CD4-positive, alpha-beta T cell (primary cell): ENCODE measurements at regions of chr1 and their contacts with region 1.

Region 1: DNA sequence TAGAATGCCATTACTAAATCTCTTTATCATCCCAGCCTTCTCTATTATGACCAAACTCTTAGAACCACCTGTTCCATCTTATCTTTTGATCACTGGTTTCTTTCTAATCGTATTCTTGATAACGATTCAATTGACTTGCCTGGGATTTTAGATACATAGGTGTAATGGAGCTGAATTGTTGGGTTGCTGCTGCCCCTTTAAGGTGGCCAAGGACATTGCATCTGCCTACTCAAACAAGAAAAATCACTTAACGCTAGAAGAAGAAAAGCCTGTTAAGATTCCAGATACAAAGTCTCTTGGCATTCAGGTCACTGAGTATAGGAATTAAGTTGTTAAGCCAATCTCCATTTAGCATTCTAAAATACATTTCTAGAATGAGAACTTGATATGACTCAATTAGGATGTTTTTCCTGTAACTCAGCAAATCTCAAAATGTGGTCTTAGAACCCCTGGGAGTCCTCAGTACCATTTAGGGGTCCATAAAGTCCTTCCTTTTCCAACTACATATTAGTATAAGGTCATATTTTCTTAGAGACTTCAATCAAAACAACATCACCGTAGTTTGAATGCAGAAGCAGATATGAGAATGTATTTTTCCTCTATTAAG is 12.4 kb downstream of the NEXN start:
- DNase-seq: peak in 3 of 14 experiments; percentile 12 to 28 (median 23)
- ATAC-seq: no peak
- H3K4me3 ChIP-seq: no peak overlapping the region
- H3K4me3 Mint-ChIP-seq: no peak overlapping the region
- H3K27ac ChIP-seq: no peak overlapping the region
- H3K27ac Mint-ChIP-seq: no peak overlapping the region
- H3K4me1 ChIP-seq: no peaks in the 10 kb centered on the region
- H3K4me1 Mint-ChIP-seq: no peaks in the 10 kb centered on the region
- H3K27me3 ChIP-seq: no peaks in the 10 kb centered on the region
- H3K27me3 Mint-ChIP-seq: no peaks in the 10 kb centered on the region
- CTCF ChIP-seq: peak; percentile 41

Region 2: GRCh38 chr1:76668046-76668445 is 1232.7 kb before region 1 on chr1:
- CTCF ChIA-PET with region 1: no interaction called
- POLR2A ChIA-PET with region 1: no interaction called
- intact Hi-C with region 1: loop called in 1 of 2 experiments (anchors 5 kb)
- DNase-seq: no peak
- ATAC-seq: no peak
- H3K4me3 ChIP-seq: no peak overlapping the region
- H3K4me3 Mint-ChIP-seq: no peak overlapping the region
- H3K27ac ChIP-seq: no peak overlapping the region
- H3K27ac Mint-ChIP-seq: no peak overlapping the region
- H3K4me1 ChIP-seq: no peaks in the 10 kb centered on the region
- H3K4me1 Mint-ChIP-seq: no peaks in the 10 kb centered on the region
- H3K27me3 ChIP-seq: no peaks in the 10 kb centered on the region
- H3K27me3 Mint-ChIP-seq: no peaks in the 10 kb centered on the region
- CTCF ChIP-seq: no peak

Region 3: DNA sequence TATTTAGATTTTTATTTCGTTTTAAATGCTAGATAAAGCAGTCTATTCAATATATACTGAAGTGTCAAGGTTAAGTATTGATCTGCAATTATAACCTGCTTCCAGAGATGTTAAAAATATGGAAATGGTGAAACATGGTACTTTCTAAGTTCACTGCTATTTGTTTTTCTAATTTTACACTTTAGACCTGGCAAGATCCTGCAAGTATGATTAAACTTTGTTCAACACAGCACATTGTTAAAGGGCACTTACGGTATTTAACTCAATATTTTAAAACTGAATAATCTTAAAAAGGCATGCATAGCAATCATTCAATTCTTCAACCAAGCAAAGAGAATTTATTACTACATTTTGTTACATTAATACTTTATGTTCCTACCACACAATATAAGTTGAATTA is 182.6 kb before region 1 on chr1:
- CTCF ChIA-PET with region 1: no interaction called
- POLR2A ChIA-PET with region 1: no interaction called
- intact Hi-C with region 1: no loop called
- DNase-seq: no peak
- ATAC-seq: no peak
- H3K4me3 ChIP-seq: no peak overlapping the region
- H3K4me3 Mint-ChIP-seq: no peak overlapping the region
- H3K27ac ChIP-seq: no peak overlapping the region
- H3K27ac Mint-ChIP-seq: no peak overlapping the region
- H3K4me1 ChIP-seq: no peaks in the 10 kb centered on the region
- H3K4me1 Mint-ChIP-seq: no peaks in the 10 kb centered on the region
- H3K27me3 ChIP-seq: no peaks in the 10 kb centered on the region
- H3K27me3 Mint-ChIP-seq: no peaks in the 10 kb centered on the region
- CTCF ChIP-seq: no peak